A673 (cell line): ENCODE measurements at regions of chr17 and their contacts with region 1.

Region 1: GRCh38 chr17:70767102-70767701 is 597.9 kb downstream of the KCNJ2 start:
- DNase-seq: peak; percentile 34
- H3K4me3 ChIP-seq: no peak overlapping the region
- H3K27ac ChIP-seq: no peak overlapping the region
- H3K4me1 ChIP-seq: no peaks in the 10 kb centered on the region
- H3K27me3 ChIP-seq: no peaks in the 10 kb centered on the region
- CTCF ChIP-seq: peak; percentile 72

Region 2: DNA sequence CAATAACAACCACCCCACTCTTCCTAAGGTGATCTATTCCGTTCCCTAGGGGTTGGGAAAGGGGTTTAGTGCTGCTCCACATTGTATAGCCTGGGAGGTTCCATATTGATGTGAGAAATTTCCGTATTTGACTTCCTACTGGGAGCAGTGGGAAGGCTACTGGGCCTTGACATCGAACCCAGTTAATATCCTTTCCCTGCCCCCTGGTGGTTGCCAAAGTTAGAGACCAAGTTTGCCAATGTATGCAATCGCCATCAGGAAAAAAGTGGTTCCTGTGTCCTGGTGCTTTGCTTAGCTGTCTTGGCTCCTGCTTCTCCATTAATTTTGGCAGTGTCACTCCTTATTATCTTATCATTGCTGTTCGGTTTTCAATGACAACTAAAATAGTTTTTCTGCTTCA is 317.0 kb after region 1 on chr17:
- CTCF ChIA-PET with region 1: no interaction called
- POLR2A ChIA-PET with region 1: no interaction called
- intact Hi-C with region 1: loop called (anchors 5 kb)
- DNase-seq: peak; percentile 40
- H3K4me3 ChIP-seq: no peak overlapping the region
- H3K27ac ChIP-seq: no peak overlapping the region
- H3K4me1 ChIP-seq: no peaks in the 10 kb centered on the region
- H3K27me3 ChIP-seq: no peaks in the 10 kb centered on the region
- CTCF ChIP-seq: peak; percentile 54

Region 3: GRCh38 chr17:71460943-71461342 is 693.7 kb after region 1 on chr17:
- CTCF ChIA-PET with region 1: no interaction called
- POLR2A ChIA-PET with region 1: no interaction called
- intact Hi-C with region 1: loop called (anchors 2 kb)
- DNase-seq: peak; percentile 40
- H3K4me3 ChIP-seq: no peak overlapping the region
- H3K27ac ChIP-seq: no peak overlapping the region
- H3K4me1 ChIP-seq: no peaks in the 10 kb centered on the region
- H3K27me3 ChIP-seq: no peaks in the 10 kb centered on the region
- CTCF ChIP-seq: peak; percentile 61